ENCODE measurements at regions of chr12 and their contacts with region 1.

Region 1: DNA sequence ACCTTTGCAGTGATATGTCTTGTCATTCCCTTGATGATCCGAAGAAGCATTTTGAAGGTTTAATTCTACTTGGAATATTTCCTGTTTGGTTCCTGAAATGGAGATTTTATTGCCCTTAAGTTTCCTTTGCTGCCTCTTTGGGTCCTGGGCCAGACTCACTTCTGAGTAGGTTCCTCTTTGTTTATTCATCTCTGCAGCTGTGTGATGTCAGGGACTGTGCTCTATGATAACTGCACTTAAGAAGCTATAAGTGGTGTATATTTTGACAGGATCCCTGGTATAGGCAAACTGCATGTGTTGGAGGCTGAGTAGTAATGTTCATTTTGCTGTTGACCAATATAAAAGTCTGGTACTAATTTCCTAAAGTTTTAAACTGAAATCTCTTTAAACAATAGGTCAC is at the start of gene KLRC4:
- DNase-seq: peak in 2 of 4 experiments; percentile 6 to 59
- ATAC-seq: peak; percentile 90
- H3K4me3 ChIP-seq: no peak within 1 kb of the TSS
- H3K27ac ChIP-seq: no peak within 1 kb of the TSS
- H3K4me1 ChIP-seq: peaks cover 0 to 3% of the 10 kb centered on the region in 2 experiments; a peak in 1 of 5 replicates
- H3K27me3 ChIP-seq: no peaks in the 10 kb centered on the region
- CTCF ChIP-seq: no peak
- EP300 ChIP-seq: no peak
- POLR2A ChIP-seq: no peak
- RAD21 ChIP-seq: 0 out of 4 replicates have a peak, but pooled peaks of 1 of the 2 experiments have one; percentile 9
- polyA plus RNA-seq, gene KLRC4: not detected

Region 2: DNA sequence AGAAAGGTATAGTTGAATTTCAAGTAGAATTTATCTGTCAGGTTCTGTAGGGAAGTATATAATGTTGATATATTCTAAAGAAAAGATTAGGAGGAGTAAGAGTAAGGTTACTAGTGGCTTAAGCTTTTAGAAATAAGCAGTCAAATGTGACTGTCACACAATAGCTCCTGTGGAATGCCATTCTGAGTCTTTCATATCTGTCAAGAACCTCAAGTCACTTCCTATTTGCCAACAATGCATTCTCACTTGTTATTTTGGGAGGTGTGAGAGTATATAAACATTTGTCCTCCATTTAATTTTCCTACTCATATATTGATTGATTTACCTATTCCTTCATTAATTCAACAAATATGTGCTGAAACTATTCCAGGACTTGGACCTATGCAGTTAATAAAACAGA is 367.2 kb before region 1 on chr12:
- CTCF ChIA-PET with region 1: no interaction called
- POLR2A ChIA-PET with region 1: no interaction called
- in situ Hi-C with region 1: no loop called
- intact Hi-C with region 1: no loop called
- DNase-seq: no peak
- ATAC-seq: no peak
- H3K4me3 ChIP-seq: no peak overlapping the region
- H3K27ac ChIP-seq: no peak overlapping the region
- H3K4me1 ChIP-seq: no peaks in the 10 kb centered on the region
- H3K27me3 ChIP-seq: peaks cover 0 to 5% of the 10 kb centered on the region in 2 experiments; a peak in 1 of 5 replicates
- CTCF ChIP-seq: no peak
- EP300 ChIP-seq: no peak
- POLR2A ChIP-seq: no peak
- RAD21 ChIP-seq: no peak

Region 3: GRCh38 chr12:10457760-10458159 is 48.4 kb after region 1 on chr12:
- CTCF ChIA-PET with region 1: no interaction called
- POLR2A ChIA-PET with region 1: no interaction called
- in situ Hi-C with region 1: loop called (anchors 5 kb)
- intact Hi-C with region 1: no loop called
- DNase-seq: no peak
- ATAC-seq: no peak
- H3K4me3 ChIP-seq: no peak overlapping the region
- H3K27ac ChIP-seq: no peak overlapping the region
- H3K4me1 ChIP-seq: no peaks in the 10 kb centered on the region
- H3K27me3 ChIP-seq: no peaks in the 10 kb centered on the region
- CTCF ChIP-seq: no peak
- EP300 ChIP-seq: no peak
- POLR2A ChIP-seq: no peak
- RAD21 ChIP-seq: no peak

Measured in K562 (cell line).